ENCODE measurements at regions of chr6 and their contacts with region 1.

Region 1: GRCh38 chr6:28981833-28982475 is 23.2 kb downstream of the ZNF311 start:
- DNase-seq: peak; percentile 44 to 74
- ATAC-seq: peak; percentile 80 to 84
- H3K4me3 ChIP-seq: peak overlapping the region; percentile 60 to 70 (median 62)
- H3K27ac ChIP-seq: peak overlapping the region; percentile 57 to 77 (median 66)
- H3K4me1 ChIP-seq: peaks cover 0 to 3% of the 10 kb centered on the region in 2 donors
- H3K27me3 ChIP-seq: peaks cover 3 to 10% (median 9%) of the 10 kb centered on the region in 3 donors
- CTCF ChIP-seq: no peak
- POLR2A ChIP-seq: no peak

Region 2: DNA sequence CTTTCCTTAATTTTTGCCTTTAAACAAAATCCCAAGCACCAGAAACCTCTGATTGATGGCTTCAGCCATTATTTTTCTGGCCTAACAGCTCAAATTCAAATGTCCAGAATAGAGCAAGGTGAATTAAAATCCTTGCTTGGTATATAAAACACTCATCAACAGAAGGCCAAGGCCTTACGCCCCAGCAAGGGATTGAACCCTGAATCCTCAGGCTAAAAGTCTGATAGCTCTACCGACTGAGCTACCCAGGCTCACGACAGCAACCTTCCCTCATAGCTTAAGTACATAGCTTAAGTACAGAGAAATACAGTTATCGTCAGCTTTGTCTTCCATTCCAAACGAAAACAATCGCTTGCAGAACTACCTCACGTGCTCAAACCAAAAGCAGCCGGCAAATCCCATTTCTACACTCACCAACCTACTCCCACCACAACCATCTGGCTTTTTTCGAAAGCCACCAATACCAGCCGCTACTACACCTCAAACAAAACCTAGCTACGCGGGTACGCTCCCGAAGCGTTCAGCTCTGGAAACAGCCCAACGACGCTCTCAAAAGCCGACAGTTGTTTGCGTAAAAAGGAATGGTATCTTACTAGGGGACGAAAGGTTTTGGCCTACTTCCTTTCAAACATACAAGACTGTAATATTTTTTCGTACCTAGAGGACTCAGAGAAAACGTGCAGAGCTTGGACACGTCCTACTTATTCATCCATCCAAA is 288.8 kb before region 1 on chr6:
- in situ Hi-C with region 1: no loop called
- intact Hi-C with region 1: no loop called
- DNase-seq: no peak
- ATAC-seq: no peak
- H3K4me3 ChIP-seq: no peak overlapping the region
- H3K27ac ChIP-seq: no peak overlapping the region
- H3K4me1 ChIP-seq: no peaks in the 10 kb centered on the region
- H3K27me3 ChIP-seq: peaks cover 26 to 64% (median 28%) of the 10 kb centered on the region in 3 donors
- CTCF ChIP-seq: no peak
- POLR2A ChIP-seq: no peak

Region 3: GRCh38 chr6:28923318-28924102 is 58.4 kb before region 1 on chr6 and contains the start of gene TRIM27:
- in situ Hi-C with region 1: no loop called
- intact Hi-C with region 1: loop called (anchors 10 kb)
- DNase-seq: peak; percentile 80 to 81
- ATAC-seq: peak; percentile 91 to 93
- H3K4me3 ChIP-seq: peak within 1 kb of the TSS; percentile 79 to 91 (median 88)
- H3K27ac ChIP-seq: peak within 1 kb of the TSS; percentile 90 to 96 (median 95)
- H3K4me1 ChIP-seq: peaks cover 16% of the 10 kb centered on the region in 2 donors
- H3K27me3 ChIP-seq: no peaks in the 10 kb centered on the region
- CTCF ChIP-seq: peak in 1 of 5 experiments; percentile 24
- POLR2A ChIP-seq: peak; percentile 85 to 89
- total RNA-seq, gene TRIM27: 33.6 to 45.1 (median 36.1) TPM

Region 4: DNA sequence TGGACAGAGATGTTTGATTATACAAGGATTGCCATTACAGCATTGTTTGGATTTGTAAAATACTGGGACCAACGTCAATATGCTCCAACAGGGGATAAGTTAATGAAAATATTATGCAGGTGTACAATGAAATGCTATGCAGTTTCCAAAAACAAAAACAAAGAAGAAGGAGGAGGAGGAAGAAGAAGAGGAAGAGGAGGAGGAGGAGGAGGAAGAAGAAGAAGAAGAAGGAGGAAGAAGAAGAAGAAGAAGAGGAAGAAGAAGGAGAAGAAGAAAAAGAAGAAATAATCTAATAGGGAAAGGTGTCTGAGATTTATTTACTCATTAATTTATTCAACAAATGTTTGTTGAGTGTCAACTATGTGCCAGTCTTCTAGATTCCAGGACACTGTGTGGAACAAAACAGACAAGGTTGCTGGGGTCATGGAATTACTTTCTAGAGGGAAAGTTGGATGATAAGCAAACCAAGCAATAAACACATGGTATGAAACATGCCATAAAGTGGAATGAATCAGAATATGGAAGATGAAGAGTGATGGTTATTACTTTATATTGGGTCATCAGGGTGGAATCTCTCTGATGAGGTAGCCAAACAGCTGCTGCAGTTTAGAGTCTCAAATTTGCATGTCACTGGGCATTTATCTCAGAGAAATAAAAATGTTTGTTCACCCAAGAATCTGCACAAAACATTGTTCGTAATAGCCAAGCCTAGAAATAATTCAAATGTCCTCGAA is 51.9 kb before region 1 on chr6:
- in situ Hi-C with region 1: loop called in 1 of 4 experiments (anchors 10 kb)
- intact Hi-C with region 1: loop called (anchors 10 kb)
- DNase-seq: no peak
- ATAC-seq: no peak
- H3K4me3 ChIP-seq: no peak overlapping the region
- H3K27ac ChIP-seq: no peak overlapping the region
- H3K4me1 ChIP-seq: no peaks in the 10 kb centered on the region
- H3K27me3 ChIP-seq: peaks cover 0 to 19% (median 0%) of the 10 kb centered on the region in 3 donors
- CTCF ChIP-seq: no peak
- POLR2A ChIP-seq: no peak

Region 5: GRCh38 chr6:28940858-28941680 is 40.9 kb before region 1 on chr6:
- in situ Hi-C with region 1: loop called in 1 of 4 experiments (anchors 10 kb)
- intact Hi-C with region 1: loop called (anchors 1 kb)
- DNase-seq: peak; percentile 38 to 51
- ATAC-seq: peak; percentile 69 to 76
- H3K4me3 ChIP-seq: peak overlapping the region; percentile 52 to 61 (median 58)
- H3K27ac ChIP-seq: peak overlapping the region; percentile 57 to 77 (median 72)
- H3K4me1 ChIP-seq: peaks cover 8 to 12% of the 10 kb centered on the region in 2 donors
- H3K27me3 ChIP-seq: peaks cover 3 to 31% (median 16%) of the 10 kb centered on the region in 3 donors
- CTCF ChIP-seq: no peak
- POLR2A ChIP-seq: no peak